GM23248 (cell line): ENCODE measurements at regions of chr15 and their contacts with region 1.

Region 1: GRCh38 chr15:27669641-27670040 is 429.5 kb downstream of the OCA2 start:
- DNase-seq: no peak
- H3K4me3 ChIP-seq: no peak overlapping the region
- H3K27ac ChIP-seq: no peak overlapping the region
- H3K4me1 ChIP-seq: no peaks in the 10 kb centered on the region
- H3K27me3 ChIP-seq: no peaks in the 10 kb centered on the region

Region 2: DNA sequence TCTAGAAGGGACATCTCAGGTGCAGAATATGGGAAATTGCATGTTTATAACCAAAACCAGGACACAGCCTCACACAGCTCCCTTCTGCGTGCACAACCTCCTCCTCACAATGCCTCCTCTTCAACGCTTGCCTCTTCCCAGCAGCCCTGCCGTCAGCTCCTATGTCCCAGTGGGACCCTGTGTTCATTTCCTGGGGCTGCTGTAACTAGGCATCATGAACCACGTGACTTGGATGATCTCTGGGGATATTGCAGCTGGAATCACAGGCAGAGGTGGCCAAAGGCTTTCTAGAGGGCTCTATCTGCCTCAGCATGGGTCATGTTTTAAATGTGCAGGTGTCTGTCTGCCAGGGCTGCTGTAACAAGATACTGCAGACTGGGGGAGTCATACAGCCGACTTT is 54.2 kb after region 1 on chr15:
- in situ Hi-C with region 1: loop called (anchors 10 kb)
- DNase-seq: no peak
- H3K4me3 ChIP-seq: no peak overlapping the region
- H3K27ac ChIP-seq: no peak overlapping the region
- H3K4me1 ChIP-seq: no peaks in the 10 kb centered on the region
- H3K27me3 ChIP-seq: no peaks in the 10 kb centered on the region

Region 3: GRCh38 chr15:27784107-27784506 is 114.5 kb after region 1 on chr15:
- in situ Hi-C with region 1: no loop called
- DNase-seq: no peak
- H3K4me3 ChIP-seq: no peak overlapping the region
- H3K27ac ChIP-seq: no peak overlapping the region
- H3K4me1 ChIP-seq: no peaks in the 10 kb centered on the region
- H3K27me3 ChIP-seq: no peaks in the 10 kb centered on the region

Region 4: DNA sequence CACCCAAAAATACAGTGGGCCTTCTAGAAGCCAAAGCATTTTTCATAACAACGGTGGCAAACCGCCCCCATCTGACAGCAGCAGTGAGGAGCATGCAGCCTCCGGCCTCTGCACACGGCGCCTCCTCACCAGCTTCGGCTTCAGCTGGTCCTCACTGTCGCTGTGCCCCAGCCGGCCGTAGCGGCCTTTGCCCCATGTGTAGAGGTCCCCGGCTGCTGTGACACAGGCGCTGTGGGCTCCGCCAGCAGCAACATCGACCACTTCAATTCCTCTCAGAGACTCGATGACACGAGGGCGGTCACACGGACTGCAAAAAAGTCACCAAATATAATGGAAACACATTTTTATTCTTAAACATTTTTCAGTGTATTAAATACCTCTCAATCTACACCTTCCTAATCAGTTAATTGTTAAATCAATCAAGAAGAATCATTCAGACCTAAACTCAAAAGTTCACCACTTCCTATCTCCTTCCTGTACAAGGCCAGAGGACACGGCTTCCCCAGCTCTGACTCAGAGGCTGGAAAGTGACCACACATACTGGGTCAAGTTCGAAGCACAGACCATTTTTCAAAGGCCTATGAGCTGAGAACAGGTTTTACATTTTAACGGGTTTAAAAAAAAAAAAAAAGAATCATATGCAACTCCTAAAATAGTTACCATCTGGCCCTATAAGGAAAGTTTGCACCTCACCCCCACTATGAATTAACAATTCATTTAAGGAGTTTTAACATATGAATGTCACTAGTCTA is 463.1 kb after region 1 on chr15:
- in situ Hi-C with region 1: no loop called
- DNase-seq: peak; percentile 62
- H3K4me3 ChIP-seq: 0 out of 2 replicates have a peak overlapping the region, but pooled peaks have one; percentile 1
- H3K27ac ChIP-seq: peak overlapping the region; percentile 28
- H3K4me1 ChIP-seq: peaks cover 18% of the 10 kb centered on the region
- H3K27me3 ChIP-seq: no peaks in the 10 kb centered on the region